Activated naive CD4-positive, alpha-beta T cell treated with anti-CD3 and anti-CD28 coated beads for 36 hours (primary cell): ENCODE measurements at regions of chr1 and their contacts with region 1.

Region 1: GRCh38 chr1:116826818-116827606 is 72.8 kb downstream of the CD2 start:
- DNase-seq: peak; percentile 92
- H3K4me3 Mint-ChIP-seq: peak overlapping the region; percentile 83
- H3K27ac Mint-ChIP-seq: peak overlapping the region; percentile 97
- H3K4me1 Mint-ChIP-seq: peaks cover 74% of the 10 kb centered on the region
- H3K27me3 Mint-ChIP-seq: no peaks in the 10 kb centered on the region

Region 2: DNA sequence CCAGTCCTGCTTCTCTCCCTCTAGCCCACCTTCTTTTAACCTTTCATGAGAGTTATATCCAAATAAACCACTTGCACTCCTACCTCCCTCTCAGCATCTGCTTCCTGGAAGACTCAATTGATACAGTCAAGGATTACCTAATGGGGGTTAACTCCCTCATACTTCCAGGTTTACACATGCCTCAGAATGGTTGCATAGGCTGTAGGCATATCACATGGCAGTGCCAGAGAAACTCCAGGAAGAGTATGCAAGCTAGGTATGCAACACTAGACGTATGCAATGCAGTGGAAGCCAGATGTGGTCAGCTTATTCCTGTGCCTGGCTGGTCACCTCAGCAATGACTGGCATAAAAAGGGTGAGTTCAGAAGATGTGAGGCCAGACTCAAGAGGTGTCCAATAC is 1218.0 kb before region 1 on chr1:
- CTCF ChIA-PET with region 1: no interaction called
- intact Hi-C with region 1: no loop called
- DNase-seq: no peak
- H3K4me3 Mint-ChIP-seq: no peak overlapping the region
- H3K27ac Mint-ChIP-seq: no peak overlapping the region
- H3K4me1 Mint-ChIP-seq: no peaks in the 10 kb centered on the region
- H3K27me3 Mint-ChIP-seq: peaks cover 12% of the 10 kb centered on the region

Region 3: GRCh38 chr1:116847688-116848531 is 20.9 kb after region 1 on chr1:
- CTCF ChIA-PET with region 1: interaction called, 6 read pairs
- intact Hi-C with region 1: loop called (anchors 1 kb)
- DNase-seq: peak; percentile 62
- H3K4me3 Mint-ChIP-seq: no peak overlapping the region
- H3K27ac Mint-ChIP-seq: peak overlapping the region; percentile 51
- H3K4me1 Mint-ChIP-seq: peaks cover 37% of the 10 kb centered on the region
- H3K27me3 Mint-ChIP-seq: no peaks in the 10 kb centered on the region

Region 4: DNA sequence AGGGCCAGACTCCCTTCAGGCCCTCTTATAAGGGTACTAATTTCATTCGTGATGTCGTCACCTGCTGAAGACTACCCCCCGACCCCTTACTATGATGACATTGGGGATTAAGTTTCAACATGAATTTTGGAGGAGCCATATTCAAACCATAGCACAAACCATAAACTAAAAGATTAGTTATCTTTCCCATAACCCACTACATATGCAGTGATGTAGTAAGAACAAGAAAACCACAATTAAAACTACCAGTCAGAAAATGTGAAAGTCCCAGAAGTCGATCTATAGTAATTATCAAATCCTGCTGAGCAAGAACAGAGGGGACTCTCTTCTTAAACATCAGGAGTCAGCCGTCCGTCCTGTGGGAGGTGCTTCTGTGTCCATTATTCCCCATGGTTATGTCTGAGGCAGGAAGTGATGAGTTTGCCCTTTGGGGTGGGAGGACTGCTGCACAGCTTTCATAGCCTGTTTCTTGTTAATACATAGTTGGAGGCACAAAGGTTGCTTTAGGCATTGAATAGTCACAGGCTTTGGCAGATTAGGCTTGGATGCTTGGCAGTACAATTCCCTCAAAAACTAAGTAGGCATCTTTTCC is 46.8 kb after region 1 on chr1:
- CTCF ChIA-PET with region 1: interaction called, 5 read pairs
- intact Hi-C with region 1: loop called (anchors 1 kb)
- DNase-seq: peak; percentile 72
- H3K4me3 Mint-ChIP-seq: no peak overlapping the region
- H3K27ac Mint-ChIP-seq: peak overlapping the region; percentile 48
- H3K4me1 Mint-ChIP-seq: peaks cover 31% of the 10 kb centered on the region
- H3K27me3 Mint-ChIP-seq: no peaks in the 10 kb centered on the region

Region 5: DNA sequence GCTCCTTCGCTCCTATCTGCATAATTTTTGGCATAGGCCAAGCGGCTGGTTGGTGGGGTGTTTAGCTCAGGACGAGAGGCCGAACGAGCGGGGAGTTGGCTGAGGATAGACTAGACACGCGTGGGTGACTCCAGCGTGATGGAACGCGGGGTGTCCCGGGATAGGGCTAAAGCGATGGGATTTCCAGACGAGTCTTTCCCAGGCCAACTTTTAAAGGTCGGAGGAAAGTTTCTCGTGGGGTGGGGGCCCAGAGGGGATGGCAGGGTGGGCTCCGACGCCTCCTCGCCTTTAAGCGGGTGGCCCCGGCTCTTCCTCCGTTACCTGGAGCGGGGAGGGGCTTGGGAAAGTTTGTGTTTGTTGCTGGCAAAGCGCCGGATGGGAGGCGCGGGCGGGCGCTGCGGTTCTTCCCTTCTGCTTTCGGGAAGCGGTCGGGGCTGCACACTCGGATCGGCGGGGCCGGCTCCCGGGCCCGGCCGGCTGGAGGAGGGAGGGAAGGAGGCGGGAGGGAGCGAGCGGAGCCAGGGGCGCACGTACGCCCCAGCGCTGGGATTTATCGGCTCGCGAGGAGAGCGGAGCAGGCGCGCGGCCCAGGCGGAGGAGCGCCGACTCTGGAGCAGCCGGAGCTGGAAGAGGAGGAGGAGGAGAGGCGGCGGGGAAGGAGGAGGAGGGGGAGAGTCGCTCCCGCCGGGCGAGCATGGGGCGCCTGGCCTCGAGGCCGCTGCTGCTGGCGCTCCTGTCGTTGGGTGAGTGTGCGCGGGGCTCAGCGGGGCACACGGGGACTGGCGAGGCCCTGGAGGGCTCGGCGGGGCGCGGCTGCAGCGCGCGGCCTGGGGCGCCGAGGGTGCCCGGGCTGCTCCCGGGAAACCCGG is 82.7 kb after region 1 on chr1 and contains the start of gene PTGFRN:
- CTCF ChIA-PET with region 1: no interaction called
- intact Hi-C with region 1: loop called (anchors 1 kb)
- DNase-seq: peak; percentile 53
- H3K4me3 Mint-ChIP-seq: peak within 1 kb of the TSS; percentile 75
- H3K27ac Mint-ChIP-seq: peak within 1 kb of the TSS; percentile 30
- H3K4me1 Mint-ChIP-seq: peaks cover 3% of the 10 kb centered on the region
- H3K27me3 Mint-ChIP-seq: no peaks in the 10 kb centered on the region
- total RNA-seq, gene PTGFRN: 24.0 to 28.0 TPM

Region 6: GRCh38 chr1:117001254-117001927 is 174.4 kb after region 1 on chr1 and contains the start of gene CD101:
- CTCF ChIA-PET with region 1: no interaction called
- intact Hi-C with region 1: loop called (anchors 1 kb)
- DNase-seq: peak; percentile 72
- H3K4me3 Mint-ChIP-seq: peak within 1 kb of the TSS; percentile 8
- H3K27ac Mint-ChIP-seq: peak within 1 kb of the TSS; percentile 82
- H3K4me1 Mint-ChIP-seq: peaks cover 59% of the 10 kb centered on the region
- H3K27me3 Mint-ChIP-seq: no peaks in the 10 kb centered on the region
- total RNA-seq, gene CD101: 0.83 to 1.1 TPM